Activated CD8-positive, alpha-beta memory T cell treated with anti-CD3 and anti-CD28 coated beads, Interleukin-2, amount 10 ng/mL, durations not matched to agents 7 days and 5 days (primary cell): ENCODE measurements at regions of chr1 and their contacts with region 1.

Region 1: GRCh38 chr1:172895050-172895460 is 155.7 kb downstream of the TNFSF18 start:
- DNase-seq: peak; percentile 53
- ATAC-seq: peak; percentile 94
- H3K4me3 Mint-ChIP-seq: peak overlapping the region; percentile 68
- H3K27ac Mint-ChIP-seq: peak overlapping the region; percentile 80
- H3K4me1 Mint-ChIP-seq: peaks cover 29% of the 10 kb centered on the region
- H3K27me3 Mint-ChIP-seq: peaks cover 55% of the 10 kb centered on the region

Region 2: GRCh38 chr1:172745014-172745413 is 150.0 kb before region 1 on chr1:
- CTCF ChIA-PET with region 1: interaction called, 10 read pairs
- DNase-seq: peak; percentile 56
- ATAC-seq: peak; percentile 69
- H3K4me3 Mint-ChIP-seq: no peak overlapping the region
- H3K27ac Mint-ChIP-seq: no peak overlapping the region
- H3K4me1 Mint-ChIP-seq: peaks cover 28% of the 10 kb centered on the region
- H3K27me3 Mint-ChIP-seq: peaks cover 53% of the 10 kb centered on the region

Region 3: GRCh38 chr1:172845371-172845770 is 49.7 kb before region 1 on chr1:
- CTCF ChIA-PET with region 1: no interaction called
- DNase-seq: peak; percentile 57
- ATAC-seq: peak; percentile 64
- H3K4me3 Mint-ChIP-seq: no peak overlapping the region
- H3K27ac Mint-ChIP-seq: peak overlapping the region; percentile 22
- H3K4me1 Mint-ChIP-seq: peaks cover 11% of the 10 kb centered on the region
- H3K27me3 Mint-ChIP-seq: peaks cover 40% of the 10 kb centered on the region

Region 4: DNA sequence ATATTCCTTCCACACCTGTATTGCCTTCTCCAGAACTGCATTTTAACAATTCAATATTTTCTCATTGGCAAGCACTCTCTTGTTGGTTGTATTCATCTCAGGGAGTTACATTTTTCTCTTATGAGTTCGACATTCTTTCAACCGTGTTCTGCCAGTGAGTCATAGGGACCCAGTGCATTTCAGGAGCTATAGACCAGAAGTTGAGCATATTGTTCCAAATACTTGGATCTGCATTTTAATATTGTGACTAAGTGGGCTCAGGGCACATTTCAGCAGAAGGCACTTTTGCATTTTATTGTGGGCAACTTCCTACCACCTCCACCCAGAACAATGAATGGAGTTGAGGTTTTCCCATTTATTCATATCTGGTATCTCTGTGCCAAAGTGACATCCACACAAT is 22.9 kb after region 1 on chr1:
- CTCF ChIA-PET with region 1: no interaction called
- DNase-seq: no peak
- ATAC-seq: no peak
- H3K4me3 Mint-ChIP-seq: no peak overlapping the region
- H3K27ac Mint-ChIP-seq: no peak overlapping the region
- H3K4me1 Mint-ChIP-seq: no peaks in the 10 kb centered on the region
- H3K27me3 Mint-ChIP-seq: peaks cover 10% of the 10 kb centered on the region